ENCODE measurements at regions of chr1 and their contacts with region 1.

Region 1: GRCh38 chr1:53485478-53486394 is 26.5 kb downstream of the DMRTB1 start:
- DNase-seq: peak; percentile 63
- H3K4me3 ChIP-seq: no peak overlapping the region
- H3K27ac ChIP-seq: no peak overlapping the region
- H3K4me1 ChIP-seq: no peaks in the 10 kb centered on the region
- H3K27me3 ChIP-seq: peaks cover 3 to 8% of the 10 kb centered on the region in 2 experiments
- CTCF ChIP-seq: peak; percentile 84 to 93
- POLR2A ChIP-seq: no peak

Region 2: DNA sequence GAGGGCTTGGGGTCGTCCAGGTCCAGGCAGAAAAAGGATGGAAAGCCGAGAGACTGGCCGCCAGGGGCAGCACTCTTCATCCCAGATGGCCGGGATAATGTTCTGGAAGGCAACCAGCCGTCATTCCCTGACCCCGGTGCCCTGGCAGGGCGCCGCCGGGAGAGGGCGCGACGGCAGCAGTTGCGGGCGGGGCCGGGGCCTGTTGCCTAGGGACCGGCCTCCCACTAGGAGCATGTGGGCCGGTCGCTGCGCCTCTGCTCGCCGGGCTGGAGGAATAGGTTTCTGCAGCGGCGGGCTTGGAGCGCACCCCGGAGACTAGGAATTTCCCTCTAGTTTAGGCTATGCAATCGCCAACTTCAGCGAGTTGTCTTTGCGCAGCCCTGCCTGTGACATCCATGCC is 15.6 kb before region 1 on chr1:
- CTCF ChIA-PET with region 1: interaction called, 26 read pairs
- POLR2A ChIA-PET with region 1: no interaction called
- dilution Hi-C with region 1: no loop called
- intact Hi-C with region 1: no loop called
- DNase-seq: peak; percentile 64
- H3K4me3 ChIP-seq: no peak overlapping the region
- H3K27ac ChIP-seq: no peak overlapping the region
- H3K4me1 ChIP-seq: no peaks in the 10 kb centered on the region
- H3K27me3 ChIP-seq: no peaks in the 10 kb centered on the region
- CTCF ChIP-seq: peak; percentile 87 to 92
- POLR2A ChIP-seq: no peak

Region 3: GRCh38 chr1:53754484-53755312 is 269.0 kb after region 1 on chr1:
- CTCF ChIA-PET with region 1: interaction called, 50 read pairs
- POLR2A ChIA-PET with region 1: no interaction called
- dilution Hi-C with region 1: no loop called
- intact Hi-C with region 1: loop called (anchors 1 kb)
- DNase-seq: peak; percentile 49
- H3K4me3 ChIP-seq: no peak overlapping the region
- H3K27ac ChIP-seq: no peak overlapping the region
- H3K4me1 ChIP-seq: no peaks in the 10 kb centered on the region
- H3K27me3 ChIP-seq: peaks cover 0 to 2% of the 10 kb centered on the region in 2 experiments
- CTCF ChIP-seq: peak; percentile 67 to 73
- POLR2A ChIP-seq: no peak

Region 4: DNA sequence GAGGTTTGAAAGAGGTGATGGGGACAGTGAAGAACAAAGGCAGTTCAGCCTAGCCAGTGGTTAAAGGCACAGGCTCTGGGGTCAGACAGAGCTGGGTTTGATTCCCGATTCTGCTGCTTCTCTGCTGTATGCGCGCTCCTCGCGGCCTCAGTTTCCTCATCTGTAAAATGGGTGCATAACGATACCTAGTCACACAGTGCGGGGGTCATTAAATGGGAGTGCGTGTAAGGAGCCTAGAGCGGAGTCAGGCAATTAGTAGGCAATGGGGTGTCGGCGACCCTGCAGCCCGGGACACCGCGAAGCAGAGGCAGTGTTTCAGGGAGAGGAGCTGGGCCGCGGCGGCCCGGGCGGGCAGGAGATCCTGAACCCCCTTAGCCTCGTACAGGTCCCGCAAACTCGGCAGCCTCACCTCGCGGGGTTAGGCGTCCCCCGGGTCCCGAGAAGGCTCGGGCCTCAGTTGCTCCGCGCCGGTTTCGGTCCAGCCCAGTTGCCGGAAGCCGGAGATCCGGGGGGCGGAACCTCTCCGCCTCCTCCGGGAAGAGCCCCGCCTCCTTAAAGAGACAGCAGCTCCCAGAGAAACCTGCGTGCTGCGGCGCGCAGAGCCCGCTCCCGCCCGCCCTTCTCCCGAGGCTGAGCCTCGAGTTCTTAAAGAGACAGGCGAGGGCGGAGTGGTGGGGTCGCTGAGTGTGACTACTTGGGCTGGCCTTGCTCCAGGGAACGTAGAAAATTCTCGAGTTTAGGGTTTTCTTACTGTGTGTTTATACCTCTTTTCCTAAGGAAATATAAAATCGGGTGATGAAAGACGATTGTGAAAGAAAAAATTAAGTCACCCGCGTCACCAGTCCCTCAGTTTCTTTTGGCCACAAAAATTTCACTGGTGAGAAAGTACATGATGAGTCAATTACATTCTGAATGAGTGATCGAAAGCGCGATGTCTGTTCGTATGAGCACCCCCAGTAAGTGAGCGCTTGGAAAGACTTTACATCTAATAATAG is 403.9 kb after region 1 on chr1 and contains the start of gene YIPF1:
- CTCF ChIA-PET with region 1: no interaction called
- POLR2A ChIA-PET with region 1: no interaction called
- dilution Hi-C with region 1: no loop called
- intact Hi-C with region 1: no loop called
- DNase-seq: peak; percentile 88
- H3K4me3 ChIP-seq: peak within 1 kb of the TSS; percentile 36 to 86 (median 67)
- H3K27ac ChIP-seq: no peak within 1 kb of the TSS
- H3K4me1 ChIP-seq: peaks cover 8% of the 10 kb centered on the region
- H3K27me3 ChIP-seq: no peaks in the 10 kb centered on the region
- CTCF ChIP-seq: no peak
- POLR2A ChIP-seq: peak; percentile 78
- total RNA-seq, gene YIPF1: 14.8 TPM in 2 replicates

Region 5: DNA sequence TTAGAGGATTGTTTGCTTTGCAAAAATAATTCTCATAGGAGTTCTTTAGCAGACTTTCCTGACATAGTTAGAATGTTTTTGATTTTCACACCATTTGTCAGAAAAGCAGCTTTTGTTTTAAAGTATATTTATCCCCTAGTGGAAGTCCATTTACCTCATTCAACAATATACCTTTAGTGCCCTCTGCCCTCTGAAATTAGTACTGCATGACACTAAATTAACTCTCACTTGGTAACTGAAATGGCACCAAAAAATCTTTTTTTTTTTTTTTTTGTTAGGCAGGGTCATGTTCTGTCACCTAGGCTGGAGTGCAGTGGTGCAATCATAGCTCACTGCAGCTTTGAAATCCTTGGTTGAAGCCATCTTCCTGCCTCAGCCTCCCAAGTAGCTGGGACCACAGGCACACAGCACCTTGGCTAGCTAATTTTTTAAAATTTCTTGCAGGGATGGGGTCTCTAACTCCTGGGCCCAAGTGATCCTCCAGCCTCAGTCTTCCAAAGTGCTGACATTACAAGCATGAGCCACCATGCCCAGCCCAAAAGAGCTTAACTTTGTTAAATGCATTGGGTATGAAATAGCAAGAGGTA is 474.0 kb after region 1 on chr1:
- CTCF ChIA-PET with region 1: interaction called, 3 read pairs
- POLR2A ChIA-PET with region 1: no interaction called
- dilution Hi-C with region 1: no loop called
- intact Hi-C with region 1: loop called (anchors 5 kb)
- DNase-seq: peak; percentile 28
- H3K4me3 ChIP-seq: no peak overlapping the region
- H3K27ac ChIP-seq: no peak overlapping the region
- H3K4me1 ChIP-seq: peaks cover 7% of the 10 kb centered on the region
- H3K27me3 ChIP-seq: no peaks in the 10 kb centered on the region
- CTCF ChIP-seq: peak; percentile 19 to 25
- POLR2A ChIP-seq: no peak

Region 6: GRCh38 chr1:54754045-54754444 is 1268.3 kb after region 1 on chr1:
- CTCF ChIA-PET with region 1: no interaction called
- POLR2A ChIA-PET with region 1: no interaction called
- dilution Hi-C with region 1: no loop called
- intact Hi-C with region 1: no loop called
- DNase-seq: no peak
- H3K4me3 ChIP-seq: no peak overlapping the region
- H3K27ac ChIP-seq: no peak overlapping the region
- H3K4me1 ChIP-seq: no peaks in the 10 kb centered on the region
- H3K27me3 ChIP-seq: no peaks in the 10 kb centered on the region
- CTCF ChIP-seq: no peak
- POLR2A ChIP-seq: no peak

Measured in endothelial cell of umbilical vein (primary cell).